OCI-LY7 (cell line): ENCODE measurements at regions of chr10 and their contacts with region 1.

Region 1: GRCh38 chr10:104113376-104113956 is 8.5 kb upstream of the SFR1 start:
- DNase-seq: no peak
- H3K4me3 ChIP-seq: no peak overlapping the region
- H3K27ac ChIP-seq: no peak overlapping the region
- H3K4me1 ChIP-seq: peaks cover 6% of the 10 kb centered on the region
- CTCF ChIP-seq: no peak

Region 2: DNA sequence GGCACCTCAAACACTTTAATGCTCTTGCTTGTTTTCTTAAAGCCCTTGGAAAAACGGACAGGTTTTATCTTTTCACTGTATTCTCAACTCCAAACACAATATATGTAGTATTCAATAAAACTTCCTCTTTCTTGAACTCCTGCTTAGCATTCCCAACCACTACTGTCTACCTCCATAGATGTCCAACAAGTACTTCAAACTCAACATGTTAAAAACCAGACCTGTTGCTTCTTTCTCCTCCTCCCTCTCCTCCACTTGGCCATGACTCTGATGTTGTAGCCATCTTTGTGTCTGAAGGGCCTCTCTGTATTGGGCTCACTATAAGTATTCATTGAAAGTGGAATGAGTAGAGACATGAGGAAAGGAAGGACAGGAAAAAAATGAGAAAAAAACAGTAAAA is 11.6 kb before region 1 on chr10:
- CTCF ChIA-PET with region 1: no interaction called
- POLR2A ChIA-PET with region 1: interaction called, 5 read pairs
- intact Hi-C with region 1: loop called (anchors 1 kb)
- DNase-seq: no peak
- H3K4me3 ChIP-seq: no peak overlapping the region
- H3K27ac ChIP-seq: no peak overlapping the region
- H3K4me1 ChIP-seq: no peaks in the 10 kb centered on the region
- CTCF ChIP-seq: no peak